Activated CD4-positive, alpha-beta T cell treated with anti-CD3 and anti-CD28 coated beads, Interleukin-2, amount 10 ng/mL, durations not matched to agents 24 days and 14 days (primary cell): ENCODE measurements at regions of chr4 and their contacts with region 1.

Region 1: GRCh38 chr4:15805583-15806517 is 27.7 kb downstream of the CD38 start:
- DNase-seq: peak; percentile 81
- H3K4me3 Mint-ChIP-seq: no peak overlapping the region
- H3K27ac Mint-ChIP-seq: peak overlapping the region; percentile 23
- H3K4me1 Mint-ChIP-seq: peaks cover 46% of the 10 kb centered on the region
- H3K27me3 Mint-ChIP-seq: no peaks in the 10 kb centered on the region

Region 2: DNA sequence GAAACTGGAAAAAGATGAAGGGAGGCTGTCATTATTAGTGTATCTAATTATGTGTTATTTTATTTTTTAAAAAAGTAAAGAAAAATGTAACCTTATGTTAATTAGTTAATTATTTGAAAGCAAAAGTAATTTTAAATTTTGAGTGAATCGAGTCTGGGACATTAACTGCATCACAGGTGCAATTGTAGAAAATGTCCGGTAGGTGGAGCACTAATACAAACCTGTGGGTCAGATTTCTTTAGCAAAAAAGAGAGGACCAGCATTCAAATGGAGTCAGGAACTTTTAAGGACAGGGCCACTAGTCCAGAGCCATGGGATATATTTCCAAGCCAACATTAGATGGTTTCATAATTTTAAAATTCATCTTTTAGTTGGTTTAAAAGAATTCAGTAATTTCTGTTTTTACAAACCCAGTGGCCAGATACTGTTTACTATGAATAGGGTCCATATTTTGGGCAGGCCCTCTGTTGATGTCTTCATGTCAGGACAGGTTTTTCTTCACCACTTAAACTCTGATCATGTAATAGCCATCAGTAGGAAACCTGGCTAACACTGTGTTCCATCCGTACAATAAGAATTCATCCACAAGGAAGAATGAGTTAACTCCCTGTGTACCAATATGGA is 75.8 kb before region 1 on chr4:
- intact Hi-C with region 1: loop called (anchors 1 kb)
- DNase-seq: peak; percentile 81
- H3K4me3 Mint-ChIP-seq: no peak overlapping the region
- H3K27ac Mint-ChIP-seq: no peak overlapping the region
- H3K4me1 Mint-ChIP-seq: peaks cover 21% of the 10 kb centered on the region
- H3K27me3 Mint-ChIP-seq: peaks cover 2% of the 10 kb centered on the region

Region 3: GRCh38 chr4:15971068-15971801 is 165.4 kb after region 1 on chr4:
- intact Hi-C with region 1: no loop called
- DNase-seq: no peak
- H3K4me3 Mint-ChIP-seq: no peak overlapping the region
- H3K27ac Mint-ChIP-seq: no peak overlapping the region
- H3K4me1 Mint-ChIP-seq: no peaks in the 10 kb centered on the region
- H3K27me3 Mint-ChIP-seq: peaks cover 19% of the 10 kb centered on the region